Caco-2 (cell line): ENCODE measurements at regions of chr5 and their contacts with region 1.

Region 1: DNA sequence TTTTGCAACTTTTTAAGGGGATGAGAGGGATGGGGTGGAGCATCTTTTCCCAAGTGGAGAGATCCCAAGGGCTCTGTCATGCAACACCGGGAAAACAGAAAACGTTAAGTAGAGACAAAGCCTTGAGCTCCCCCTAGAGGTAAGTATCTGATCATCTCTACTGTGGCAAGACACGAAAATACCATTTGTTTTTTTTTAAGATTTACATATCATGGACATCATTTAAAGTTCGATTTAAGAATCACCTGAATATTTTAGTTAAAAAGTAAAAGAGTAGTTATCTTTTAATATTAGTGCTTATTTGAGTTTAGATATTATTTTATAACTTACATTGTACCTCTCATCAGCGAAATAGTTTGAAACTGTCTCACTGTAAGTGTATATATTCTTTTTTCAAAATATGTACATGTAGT is 200.4 kb downstream of the LRRC70 start:
- DNase-seq: peak in 1 of 2 experiments; percentile 67
- H3K4me3 ChIP-seq: no peak overlapping the region
- H3K4me3 Mint-ChIP-seq: no peak overlapping the region
- H3K27ac Mint-ChIP-seq: no peak overlapping the region
- H3K4me1 ChIP-seq: no peaks in the 10 kb centered on the region
- H3K4me1 Mint-ChIP-seq: no peaks in the 10 kb centered on the region
- H3K27me3 ChIP-seq: no peaks in the 10 kb centered on the region
- H3K27me3 Mint-ChIP-seq: no peaks in the 10 kb centered on the region
- CTCF ChIP-seq: peak; percentile 75 to 78

Region 2: DNA sequence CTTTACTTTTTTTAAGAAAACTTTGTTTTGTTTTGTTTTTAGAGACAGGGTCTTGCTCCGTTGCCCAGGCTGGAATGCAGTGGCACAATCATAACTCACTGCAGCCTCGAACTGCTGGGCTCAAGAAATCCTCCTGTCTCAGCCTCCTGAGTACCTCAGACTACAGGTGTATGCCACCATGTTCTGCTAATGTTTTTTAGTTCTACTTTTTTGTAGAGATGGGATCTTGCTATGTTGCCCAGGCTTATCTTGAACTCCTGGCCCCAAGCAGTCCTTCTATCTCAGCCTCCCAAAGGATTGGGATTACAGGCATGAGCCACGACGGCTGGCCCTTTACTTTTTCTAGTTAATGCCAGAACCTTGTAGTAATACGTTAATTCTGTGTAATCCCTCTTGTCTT is 330.5 kb before region 1 on chr5:
- CTCF ChIA-PET with region 1: interaction called, 9 read pairs
- POLR2A ChIA-PET with region 1: no interaction called
- intact Hi-C with region 1: loop called (anchors 1 kb)
- DNase-seq: no peak
- H3K4me3 ChIP-seq: no peak overlapping the region
- H3K4me3 Mint-ChIP-seq: no peak overlapping the region
- H3K27ac Mint-ChIP-seq: no peak overlapping the region
- H3K4me1 ChIP-seq: 0 out of 2 replicates have a peak, but pooled peaks cover 5% of the 10 kb centered on the region
- H3K4me1 Mint-ChIP-seq: no peaks in the 10 kb centered on the region
- H3K27me3 ChIP-seq: no peaks in the 10 kb centered on the region
- H3K27me3 Mint-ChIP-seq: no peaks in the 10 kb centered on the region
- CTCF ChIP-seq: no peak

Region 3: DNA sequence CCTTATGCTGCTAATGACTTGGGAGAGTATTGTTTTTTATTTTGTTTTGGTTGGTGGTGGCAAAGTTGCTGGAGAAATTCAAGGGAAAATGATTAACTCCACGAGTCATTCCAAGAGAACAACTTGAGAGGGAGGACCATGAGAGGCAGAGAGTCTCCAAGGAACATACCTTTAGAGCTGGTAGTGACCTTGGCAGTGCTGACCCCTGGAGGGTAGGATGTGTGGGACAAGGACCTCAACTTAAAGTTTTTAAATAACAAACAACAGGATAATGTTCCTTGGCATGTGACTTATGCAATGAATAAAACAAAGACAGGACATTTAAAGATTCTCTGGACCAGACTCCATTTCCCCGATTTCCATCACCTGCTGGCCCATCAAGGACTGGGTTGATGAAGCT is 60.6 kb before region 1 on chr5:
- CTCF ChIA-PET with region 1: no interaction called
- POLR2A ChIA-PET with region 1: no interaction called
- intact Hi-C with region 1: loop called (anchors 5 kb)
- DNase-seq: no peak
- H3K4me3 ChIP-seq: no peak overlapping the region
- H3K4me3 Mint-ChIP-seq: no peak overlapping the region
- H3K27ac Mint-ChIP-seq: no peak overlapping the region
- H3K4me1 ChIP-seq: no peaks in the 10 kb centered on the region
- H3K4me1 Mint-ChIP-seq: no peaks in the 10 kb centered on the region
- H3K27me3 ChIP-seq: no peaks in the 10 kb centered on the region
- H3K27me3 Mint-ChIP-seq: peaks cover 3% of the 10 kb centered on the region
- CTCF ChIP-seq: no peak

Region 4: GRCh38 chr5:62742207-62742606 is 36.8 kb before region 1 on chr5:
- CTCF ChIA-PET with region 1: no interaction called
- POLR2A ChIA-PET with region 1: no interaction called
- intact Hi-C with region 1: loop called (anchors 5 kb)
- DNase-seq: peak; percentile 53
- H3K4me3 ChIP-seq: no peak overlapping the region
- H3K4me3 Mint-ChIP-seq: peak overlapping the region; percentile 60
- H3K27ac Mint-ChIP-seq: peak overlapping the region; percentile 65
- H3K4me1 ChIP-seq: peaks cover 30% of the 10 kb centered on the region
- H3K4me1 Mint-ChIP-seq: peaks cover 38% of the 10 kb centered on the region
- H3K27me3 ChIP-seq: no peaks in the 10 kb centered on the region
- H3K27me3 Mint-ChIP-seq: no peaks in the 10 kb centered on the region
- CTCF ChIP-seq: no peak